OCI-LY7 (cell line): ENCODE measurements at regions of chr2 and their contacts with region 1.

Region 1: GRCh38 chr2:12096051-12096787 is 349.8 kb downstream of the LPIN1 start:
- DNase-seq: no peak
- H3K4me3 ChIP-seq: no peak overlapping the region
- H3K27ac ChIP-seq: no peak overlapping the region
- H3K4me1 ChIP-seq: peaks cover 16% of the 10 kb centered on the region
- CTCF ChIP-seq: no peak

Region 2: DNA sequence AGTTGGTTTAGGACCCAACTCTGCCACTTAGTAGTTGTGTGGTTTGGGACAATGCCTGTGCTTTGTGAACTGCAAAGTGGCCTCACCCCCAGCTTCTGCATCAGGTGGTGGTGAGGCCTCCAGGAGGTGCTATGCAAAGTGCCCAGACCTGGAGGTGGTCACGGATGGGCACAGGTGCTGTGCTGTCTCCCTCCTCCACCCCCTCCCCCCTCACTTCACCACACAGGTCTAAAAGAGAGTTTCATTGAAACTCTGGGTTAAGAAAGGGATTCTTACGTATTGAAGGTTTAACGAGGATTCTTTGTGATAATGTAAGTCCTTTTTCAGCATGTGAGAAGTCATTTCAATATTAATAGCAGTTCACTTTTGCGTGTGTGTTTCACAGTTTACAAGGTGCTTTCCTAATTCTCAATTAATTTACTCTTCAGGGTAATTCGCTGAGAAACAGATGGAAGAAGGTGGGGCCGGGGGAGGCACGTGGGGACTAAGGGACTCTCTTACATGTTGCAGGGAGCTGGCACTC is 20.1 kb after region 1 on chr2:
- CTCF ChIA-PET with region 1: no interaction called
- POLR2A ChIA-PET with region 1: interaction called, 16 read pairs
- intact Hi-C with region 1: no loop called
- DNase-seq: peak; percentile 74
- H3K4me3 ChIP-seq: peak overlapping the region; percentile 18
- H3K27ac ChIP-seq: no peak overlapping the region
- H3K4me1 ChIP-seq: peaks cover 25% of the 10 kb centered on the region
- CTCF ChIP-seq: peak; percentile 49